WTC11 (cell line): ENCODE measurements at regions of chr11 and their contacts with region 1.

Region 1: DNA sequence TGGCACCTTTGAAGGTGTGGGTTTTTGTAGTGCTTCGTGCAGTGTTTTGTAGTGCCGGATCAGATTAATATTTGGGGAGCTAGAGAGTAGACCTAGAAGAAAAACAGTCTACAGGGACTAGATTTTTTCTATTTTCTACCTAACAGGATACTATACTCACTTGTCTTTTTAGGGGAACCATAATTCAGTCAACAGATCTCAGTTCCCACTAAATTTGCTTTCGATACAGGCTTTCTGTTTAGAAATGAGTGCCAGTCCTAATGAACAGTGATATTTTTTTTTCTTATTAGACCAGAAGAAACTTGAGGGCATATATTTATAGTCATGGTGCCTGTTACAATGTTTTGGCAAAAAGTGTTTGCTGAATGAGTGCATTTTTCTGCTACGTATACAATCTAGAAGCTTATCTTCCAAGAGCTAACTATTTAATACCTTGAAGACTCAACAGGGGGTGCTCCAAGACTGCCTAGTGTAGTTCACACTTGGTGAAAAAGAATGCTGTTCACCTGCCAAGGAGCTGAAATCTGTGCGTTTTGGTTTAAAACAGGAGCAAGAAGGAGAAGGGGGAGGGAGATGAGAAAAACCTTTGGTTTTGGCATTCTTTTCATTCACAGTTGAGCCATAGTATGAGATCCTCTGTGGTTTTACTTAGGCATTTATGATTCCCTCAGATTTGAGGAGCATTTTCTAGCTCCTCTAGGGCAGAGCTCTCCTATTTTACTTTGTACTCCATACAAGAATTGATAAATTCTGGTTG is 44.9 kb upstream of the VSTM5 start:
- DNase-seq: peak; percentile 20
- ATAC-seq: peak; percentile 96
- H3K4me3 Mint-ChIP-seq: no peak overlapping the region
- H3K27ac Mint-ChIP-seq: no peak overlapping the region
- H3K4me1 Mint-ChIP-seq: no peaks in the 10 kb centered on the region
- H3K27me3 Mint-ChIP-seq: peaks cover 10% of the 10 kb centered on the region
- CTCF ChIP-seq: no peak; the same call in 1 of the 2 replicates

Region 2: DNA sequence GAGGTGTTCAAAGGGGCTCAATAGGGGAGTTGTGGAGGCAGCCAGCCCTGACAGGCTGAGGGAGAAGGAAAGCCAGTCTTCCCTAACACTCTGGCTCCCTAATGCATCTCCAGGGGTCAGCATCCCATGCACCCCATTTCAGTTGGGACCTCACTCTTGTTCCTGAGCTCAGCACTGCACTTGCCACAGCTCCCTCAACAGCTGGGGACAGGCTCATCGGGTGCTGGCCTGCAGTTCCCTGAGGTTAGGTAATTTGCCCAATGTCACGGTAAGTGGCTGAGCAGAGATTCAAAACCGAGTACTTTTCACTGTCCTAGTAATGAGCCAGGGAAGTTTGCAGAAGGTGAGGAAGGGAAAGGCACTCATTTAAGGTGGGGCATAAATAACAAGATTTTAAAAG is 65.7 kb before region 1 on chr11:
- CTCF ChIA-PET with region 1: interaction called, 10 read pairs
- POLR2A ChIA-PET with region 1: no interaction called
- DNase-seq: no peak
- ATAC-seq: no peak
- H3K4me3 Mint-ChIP-seq: no peak overlapping the region
- H3K27ac Mint-ChIP-seq: no peak overlapping the region
- H3K4me1 Mint-ChIP-seq: no peaks in the 10 kb centered on the region; the same call in 1 of the 2 replicates
- H3K27me3 Mint-ChIP-seq: no peaks in the 10 kb centered on the region
- CTCF ChIP-seq: no peak

Region 3: GRCh38 chr11:93921695-93922468 is 26.6 kb after region 1 on chr11:
- CTCF ChIA-PET with region 1: interaction called, 37 read pairs
- POLR2A ChIA-PET with region 1: no interaction called
- DNase-seq: peak; percentile 79
- ATAC-seq: peak; percentile 99
- H3K4me3 Mint-ChIP-seq: no peak overlapping the region
- H3K27ac Mint-ChIP-seq: no peak overlapping the region
- H3K4me1 Mint-ChIP-seq: 0 out of 2 replicates have a peak, but pooled peaks cover 7% of the 10 kb centered on the region
- H3K27me3 Mint-ChIP-seq: peaks cover 2% of the 10 kb centered on the region; the same call in 1 of the 2 replicates
- CTCF ChIP-seq: peak; percentile 75

Region 4: GRCh38 chr11:94171693-94172440 is 276.6 kb after region 1 on chr11:
- CTCF ChIA-PET with region 1: interaction called, 14 read pairs
- POLR2A ChIA-PET with region 1: interaction called, 3 read pairs
- DNase-seq: peak; percentile 75
- ATAC-seq: peak; percentile 89
- H3K4me3 Mint-ChIP-seq: no peak overlapping the region
- H3K27ac Mint-ChIP-seq: no peak overlapping the region
- H3K4me1 Mint-ChIP-seq: peaks cover 62% of the 10 kb centered on the region
- H3K27me3 Mint-ChIP-seq: no peaks in the 10 kb centered on the region
- CTCF ChIP-seq: peak; percentile 70

Region 5: GRCh38 chr11:94417386-94417987 is 522.2 kb after region 1 on chr11:
- CTCF ChIA-PET with region 1: interaction called, 23 read pairs
- POLR2A ChIA-PET with region 1: no interaction called
- DNase-seq: no peak
- ATAC-seq: peak; percentile 61
- H3K4me3 Mint-ChIP-seq: no peak overlapping the region
- H3K27ac Mint-ChIP-seq: no peak overlapping the region; the same call in 1 of the 2 replicates
- H3K4me1 Mint-ChIP-seq: no peaks in the 10 kb centered on the region
- H3K27me3 Mint-ChIP-seq: no peaks in the 10 kb centered on the region
- CTCF ChIP-seq: peak; percentile 43; the same call in 1 of the 2 replicates

Region 6: GRCh38 chr11:94511932-94512781 is 616.9 kb after region 1 on chr11 and contains the start of gene C11orf97:
- CTCF ChIA-PET with region 1: interaction called, 10 read pairs
- POLR2A ChIA-PET with region 1: no interaction called
- DNase-seq: peak; percentile 86
- ATAC-seq: peak; percentile 99
- H3K4me3 Mint-ChIP-seq: peak within 1 kb of the TSS; percentile 70
- H3K27ac Mint-ChIP-seq: no peak within 1 kb of the TSS
- H3K4me1 Mint-ChIP-seq: peaks cover 5% of the 10 kb centered on the region
- H3K27me3 Mint-ChIP-seq: peaks cover 61% of the 10 kb centered on the region
- CTCF ChIP-seq: no peak
- total RNA-seq, gene C11orf97: not detected in 3 replicates